Ovary (tissue), 10 donors: ENCODE measurements at regions of chr20 and their contacts with region 1.

Region 1: DNA sequence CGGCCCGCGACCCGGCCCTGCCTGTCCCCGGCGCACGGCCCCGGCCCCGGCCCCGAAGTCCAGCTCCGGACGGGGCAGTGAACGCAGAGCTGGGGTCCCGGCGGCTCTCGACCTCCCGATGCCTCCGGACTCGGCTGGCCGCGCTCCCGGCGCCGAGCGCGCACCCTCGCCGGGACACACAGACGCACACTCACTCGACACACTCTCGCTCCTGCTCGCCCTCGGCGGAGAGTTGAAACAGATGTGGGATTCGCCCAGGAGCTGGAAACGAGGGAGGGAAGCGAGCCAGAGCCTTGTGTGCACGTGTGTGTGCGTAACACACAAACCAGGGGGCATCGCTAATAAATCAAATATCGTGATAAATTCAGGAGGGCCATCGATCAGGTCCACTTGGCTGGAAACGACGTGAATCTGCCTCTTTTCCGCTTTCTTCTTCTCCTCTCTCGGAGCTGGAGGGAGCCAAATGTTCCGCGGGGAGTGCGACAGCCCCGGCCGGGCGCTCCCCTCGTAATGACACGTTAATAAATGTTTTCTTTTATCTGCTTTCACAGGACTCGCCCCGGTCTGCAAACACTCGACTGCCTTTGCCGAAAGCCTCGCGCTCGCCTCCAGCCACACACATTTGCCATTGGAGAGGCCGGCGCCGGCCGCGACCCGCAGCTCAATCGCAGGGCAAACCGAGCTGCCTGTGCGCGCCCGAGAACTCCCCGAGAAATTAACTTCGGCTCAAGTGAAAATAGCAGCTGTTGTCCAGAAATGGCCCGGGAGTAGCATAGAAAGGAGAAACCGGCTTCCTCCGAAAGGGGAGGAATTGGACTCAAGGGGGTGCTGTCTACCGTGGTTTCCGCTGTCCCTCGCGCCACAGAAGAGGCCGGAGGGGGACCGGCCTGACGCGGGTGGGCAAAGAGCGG is 828 bp upstream of the SULF2 start:
- DNase-seq: peak; percentile 78 to 86 (median 82)
- H3K4me3 ChIP-seq: peak overlapping the region; percentile 55
- H3K27ac ChIP-seq: peak overlapping the region; percentile 83 to 92
- H3K4me1 ChIP-seq: peaks cover 10% of the 10 kb centered on the region
- H3K27me3 ChIP-seq: no peaks in the 10 kb centered on the region
- CTCF ChIP-seq: peak in 2 of 3 donors; percentile 78 to 83
- EP300 ChIP-seq: no peak
- POLR2A ChIP-seq: no peak

Region 2: GRCh38 chr20:47663333-47664067 is 122.6 kb before region 1 on chr20:
- intact Hi-C with region 1: loop called in 3 of 4 experiments (anchors 5 to 10 kb)
- DNase-seq: peak; percentile 75 to 90 (median 86)
- H3K4me3 ChIP-seq: no peak overlapping the region
- H3K27ac ChIP-seq: peak overlapping the region; percentile 3 to 25
- H3K4me1 ChIP-seq: peaks cover 10% of the 10 kb centered on the region
- H3K27me3 ChIP-seq: no peaks in the 10 kb centered on the region
- CTCF ChIP-seq: peak; percentile 85 to 96 (median 93)
- EP300 ChIP-seq: no peak
- POLR2A ChIP-seq: no peak

Region 3: GRCh38 chr20:47713878-47714450 is 72.1 kb before region 1 on chr20:
- intact Hi-C with region 1: loop called in 1 of 4 experiments (anchors 10 kb)
- DNase-seq: peak; percentile 50 to 71 (median 70)
- H3K4me3 ChIP-seq: peak overlapping the region; percentile 11
- H3K27ac ChIP-seq: peak overlapping the region in 1 of 2 donors; percentile 55
- H3K4me1 ChIP-seq: peaks cover 29% of the 10 kb centered on the region
- H3K27me3 ChIP-seq: no peaks in the 10 kb centered on the region
- CTCF ChIP-seq: no peak
- EP300 ChIP-seq: no peak
- POLR2A ChIP-seq: no peak

Region 4: DNA sequence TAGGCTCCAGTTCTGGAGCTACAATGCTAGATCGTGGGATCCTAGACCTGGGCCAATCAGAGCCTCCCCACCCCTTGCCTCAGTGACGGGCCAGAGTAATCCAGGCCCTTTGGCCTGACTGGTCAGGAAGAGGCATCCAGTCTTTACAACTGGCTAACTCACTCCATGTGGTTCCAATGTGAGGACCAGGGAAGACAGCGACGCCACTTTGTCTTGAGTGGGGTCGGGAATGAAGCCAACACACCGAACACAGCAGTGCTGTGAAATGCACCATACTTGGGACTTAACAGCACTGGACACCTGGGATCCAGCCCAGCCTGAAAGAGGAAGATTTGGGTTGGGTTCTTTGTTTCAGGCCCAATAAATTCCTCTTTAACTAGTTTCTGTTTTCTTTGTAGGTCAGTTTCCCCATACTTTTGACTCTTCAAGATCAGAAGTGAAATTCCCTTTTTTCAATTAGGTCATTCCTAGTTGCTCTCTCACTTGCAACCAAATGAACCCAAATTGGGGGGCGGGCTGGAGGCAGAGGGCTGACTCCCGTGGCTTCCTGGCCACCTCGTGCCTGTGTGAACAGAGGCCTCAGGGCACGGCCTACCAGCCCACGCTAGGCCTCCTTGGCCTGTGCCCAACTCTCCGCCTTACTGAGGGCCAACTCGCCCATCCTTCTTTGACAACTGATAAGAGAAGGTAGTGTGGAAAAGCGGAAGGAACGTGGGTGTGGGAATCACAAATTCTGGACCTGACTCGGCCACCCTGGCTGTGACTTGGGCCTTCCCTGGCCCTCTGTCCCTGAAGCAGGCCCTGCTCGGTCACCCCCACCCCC is 17.9 kb before region 1 on chr20:
- intact Hi-C with region 1: no loop called
- DNase-seq: peak in 2 of 5 donors; percentile 55 to 67
- H3K4me3 ChIP-seq: no peak overlapping the region
- H3K27ac ChIP-seq: no peak overlapping the region
- H3K4me1 ChIP-seq: peaks cover 13% of the 10 kb centered on the region
- H3K27me3 ChIP-seq: no peaks in the 10 kb centered on the region
- CTCF ChIP-seq: no peak
- EP300 ChIP-seq: no peak
- POLR2A ChIP-seq: no peak

Region 5: GRCh38 chr20:47973519-47974233 is 187.6 kb after region 1 on chr20:
- intact Hi-C with region 1: loop called in 1 of 4 experiments (anchors 10 kb)
- DNase-seq: no peak
- H3K4me3 ChIP-seq: no peak overlapping the region
- H3K27ac ChIP-seq: no peak overlapping the region
- H3K4me1 ChIP-seq: peaks cover 4% of the 10 kb centered on the region
- H3K27me3 ChIP-seq: no peaks in the 10 kb centered on the region
- CTCF ChIP-seq: no peak
- EP300 ChIP-seq: no peak
- POLR2A ChIP-seq: no peak

Region 6: DNA sequence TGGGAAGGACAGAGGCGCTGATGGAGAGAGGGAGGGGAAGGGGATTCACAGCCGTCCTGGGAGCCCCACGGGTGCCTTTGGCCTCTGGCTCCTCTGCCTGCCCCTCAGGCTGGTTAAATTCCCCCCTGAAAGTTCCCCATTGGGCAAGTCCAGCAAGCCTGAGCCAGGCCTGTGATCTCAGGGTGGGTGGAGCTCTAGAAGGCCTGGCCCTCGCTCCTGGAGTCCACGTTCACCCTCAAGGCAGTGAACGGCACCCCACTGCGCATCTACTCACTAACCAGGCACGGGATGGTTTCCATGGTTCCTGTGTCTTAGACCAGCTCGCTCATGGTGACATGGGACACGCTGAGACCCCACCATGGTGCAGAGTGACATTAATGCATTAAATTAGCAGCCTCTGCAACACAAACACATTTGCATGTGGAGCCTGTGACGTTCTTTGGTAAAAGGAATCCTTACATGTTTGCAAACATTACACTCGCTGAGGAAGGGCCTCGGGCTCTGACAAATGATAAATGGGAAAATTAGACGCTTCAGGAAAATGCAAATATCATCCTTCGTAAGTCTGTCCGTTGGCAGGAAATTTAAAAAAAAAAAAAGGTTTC is 589.0 kb after region 1 on chr20:
- intact Hi-C with region 1: loop called in 1 of 4 experiments (anchors 5 kb)
- DNase-seq: no peak
- H3K4me3 ChIP-seq: no peak overlapping the region
- H3K27ac ChIP-seq: no peak overlapping the region
- H3K4me1 ChIP-seq: no peaks in the 10 kb centered on the region
- H3K27me3 ChIP-seq: no peaks in the 10 kb centered on the region
- CTCF ChIP-seq: no peak
- EP300 ChIP-seq: no peak
- POLR2A ChIP-seq: no peak